ENCODE measurements at regions of chr19 and their contacts with region 1.

Region 1: GRCh38 chr19:13774217-13775191 is at the start of gene C19orf53:
- DNase-seq: peak; percentile 92

Region 2: GRCh38 chr19:13731147-13731964 is 43.1 kb before region 1 on chr19:
- CTCF ChIA-PET with region 1: no interaction called
- POLR2A ChIA-PET with region 1: interaction called, 10 read pairs
- DNase-seq: peak; percentile 99

Region 3: GRCh38 chr19:13748169-13748828 is 26.2 kb before region 1 on chr19:
- CTCF ChIA-PET with region 1: interaction called, 6 read pairs
- POLR2A ChIA-PET with region 1: interaction called, 13 read pairs
- DNase-seq: no peak

Region 4: DNA sequence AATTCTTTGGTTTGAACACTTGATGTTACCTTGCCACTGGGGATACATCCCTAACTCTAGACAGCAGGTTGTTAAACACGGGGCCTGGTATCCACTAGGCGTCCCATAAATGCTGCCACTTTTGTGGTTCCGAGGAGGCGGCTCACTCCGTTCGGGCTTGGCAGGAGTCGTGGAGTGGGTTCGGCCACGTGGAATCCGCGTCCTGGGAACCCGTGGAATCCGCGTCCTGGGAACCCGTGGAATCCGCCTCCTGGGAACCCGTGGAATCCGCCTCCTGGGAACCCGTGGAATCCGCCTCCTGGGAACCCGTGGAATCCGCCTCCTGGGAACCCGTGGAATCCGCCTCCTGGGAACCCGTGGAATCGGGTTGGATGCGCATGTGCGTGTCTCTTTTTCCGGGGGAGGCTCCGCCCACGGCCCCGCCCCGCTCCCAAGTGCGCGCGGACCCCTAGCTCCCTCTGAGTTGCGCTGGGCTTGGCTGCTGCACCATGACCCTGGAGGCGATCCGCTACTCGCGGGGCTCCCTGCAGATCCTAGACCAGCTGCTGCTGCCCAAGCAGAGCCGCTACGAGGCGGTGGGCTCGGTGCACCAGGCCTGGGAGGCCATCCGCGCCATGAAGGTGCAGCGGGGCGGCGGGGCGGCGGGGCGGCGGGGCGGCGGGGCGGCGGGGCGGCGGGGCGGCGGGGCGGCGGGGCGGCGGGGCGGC is 10.2 kb before region 1 on chr19 and contains the start of gene MRI1:
- CTCF ChIA-PET with region 1: no interaction called
- POLR2A ChIA-PET with region 1: interaction called, 31 read pairs
- DNase-seq: peak; percentile 87

Region 5: GRCh38 chr19:13847407-13848339 is 73.2 kb after region 1 on chr19:
- CTCF ChIA-PET with region 1: no interaction called
- POLR2A ChIA-PET with region 1: interaction called, 26 read pairs
- DNase-seq: peak; percentile 77

Region 6: GRCh38 chr19:13861732-13862531 is 87.4 kb after region 1 on chr19:
- CTCF ChIA-PET with region 1: interaction called, 5 read pairs
- POLR2A ChIA-PET with region 1: interaction called, 26 read pairs
- DNase-seq: peak; percentile 91

Measured in HEK293T (cell line).